Endothelial cell of umbilical vein (primary cell): ENCODE measurements at regions of chr12 and their contacts with region 1.

Region 1: DNA sequence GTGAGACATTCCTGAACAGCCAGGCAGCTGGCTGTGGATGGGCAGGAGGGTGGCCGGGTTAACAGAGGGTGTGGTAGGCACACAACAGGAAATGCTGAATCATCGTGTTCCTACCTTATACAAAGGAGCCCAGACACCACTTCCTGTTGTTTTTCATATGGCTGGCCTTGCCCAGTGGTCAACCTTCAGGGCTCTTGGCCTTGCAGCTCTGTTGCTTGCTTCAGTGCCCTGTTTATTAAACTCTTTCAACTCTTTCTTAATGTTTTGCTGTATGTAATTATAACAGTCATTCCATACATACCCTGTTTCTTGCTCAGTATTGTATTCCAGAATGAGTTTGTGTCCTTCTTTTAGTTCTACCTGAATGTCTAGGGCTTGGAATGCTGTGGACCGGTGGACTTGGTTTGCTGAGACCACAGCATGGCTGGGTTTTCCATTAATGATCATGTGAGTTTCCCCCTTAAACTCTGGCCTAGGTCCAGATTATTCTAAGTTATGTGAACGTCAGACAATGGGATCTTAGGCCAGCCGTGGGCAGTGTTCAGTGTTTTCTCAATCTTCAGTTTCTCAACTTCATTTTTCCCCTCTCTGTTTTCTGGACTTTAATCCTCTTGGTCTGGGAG is 11.9 kb downstream of the CFAP54 start:
- DNase-seq: peak; percentile 94
- H3K4me3 ChIP-seq: peak overlapping the region in 1 of 3 experiments; percentile 9
- H3K27ac ChIP-seq: peak overlapping the region; percentile 99
- H3K4me1 ChIP-seq: peaks cover 46% of the 10 kb centered on the region
- H3K27me3 ChIP-seq: no peaks in the 10 kb centered on the region
- CTCF ChIP-seq: no peak
- POLR2A ChIP-seq: peak; percentile 91

Region 2: GRCh38 chr12:95608252-95609033 is 892.8 kb before region 1 on chr12:
- CTCF ChIA-PET with region 1: no interaction called
- POLR2A ChIA-PET with region 1: no interaction called
- dilution Hi-C with region 1: no loop called
- intact Hi-C with region 1: loop called (anchors 5 kb)
- DNase-seq: peak; percentile 91
- H3K4me3 ChIP-seq: no peak overlapping the region
- H3K27ac ChIP-seq: peak overlapping the region; percentile 91
- H3K4me1 ChIP-seq: peaks cover 74% of the 10 kb centered on the region
- H3K27me3 ChIP-seq: no peaks in the 10 kb centered on the region
- CTCF ChIP-seq: no peak
- POLR2A ChIP-seq: no peak

Region 3: DNA sequence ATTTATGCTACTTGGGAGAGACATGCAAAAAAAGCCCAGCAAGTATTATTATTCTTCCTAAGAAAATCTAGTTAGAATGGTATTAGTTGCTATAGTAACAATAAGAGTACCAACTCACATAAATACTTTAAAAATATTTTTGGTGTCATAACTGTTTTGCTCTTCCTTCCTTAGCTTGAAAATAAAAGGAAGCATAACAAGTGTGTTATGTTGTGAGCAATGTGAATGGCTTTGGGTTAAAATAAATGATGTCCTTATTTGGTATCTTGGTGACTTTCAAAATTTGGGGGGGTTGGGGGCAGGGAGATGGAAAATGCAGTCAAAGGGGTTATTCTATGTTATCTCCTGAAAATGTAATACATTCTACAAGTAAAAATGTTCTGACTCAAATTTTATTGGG is 216.1 kb before region 1 on chr12:
- CTCF ChIA-PET with region 1: no interaction called
- POLR2A ChIA-PET with region 1: no interaction called
- dilution Hi-C with region 1: no loop called
- intact Hi-C with region 1: no loop called
- DNase-seq: no peak
- H3K4me3 ChIP-seq: no peak overlapping the region
- H3K27ac ChIP-seq: no peak overlapping the region
- H3K4me1 ChIP-seq: no peaks in the 10 kb centered on the region
- H3K27me3 ChIP-seq: no peaks in the 10 kb centered on the region
- CTCF ChIP-seq: no peak
- POLR2A ChIP-seq: no peak

Region 4: GRCh38 chr12:96335270-96335669 is 166.0 kb before region 1 on chr12:
- CTCF ChIA-PET with region 1: no interaction called
- POLR2A ChIA-PET with region 1: no interaction called
- dilution Hi-C with region 1: no loop called
- intact Hi-C with region 1: no loop called
- DNase-seq: peak; percentile 39
- H3K4me3 ChIP-seq: no peak overlapping the region
- H3K27ac ChIP-seq: no peak overlapping the region
- H3K4me1 ChIP-seq: peaks cover 30% of the 10 kb centered on the region
- H3K27me3 ChIP-seq: no peaks in the 10 kb centered on the region
- CTCF ChIP-seq: no peak
- POLR2A ChIP-seq: no peak

Region 5: DNA sequence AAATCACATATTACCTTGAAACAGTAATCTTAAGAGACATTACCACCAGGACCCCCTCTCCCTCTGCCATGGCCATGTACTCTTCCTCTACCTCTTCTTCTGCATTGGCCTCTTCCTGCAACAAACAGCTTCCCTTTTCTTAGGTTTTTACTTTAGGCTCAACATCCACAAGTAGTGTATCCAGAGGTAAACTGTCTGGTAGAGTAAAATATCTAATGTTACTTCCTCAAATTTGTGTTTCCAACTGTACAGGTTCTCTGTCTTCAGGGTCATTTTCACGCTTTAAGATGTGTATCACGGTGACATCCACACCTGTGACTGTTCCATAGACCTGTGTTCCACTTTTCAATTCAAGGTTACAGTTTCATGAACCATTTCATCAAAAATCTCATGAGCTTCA is 114.5 kb before region 1 on chr12:
- CTCF ChIA-PET with region 1: interaction called, 3 read pairs
- POLR2A ChIA-PET with region 1: no interaction called
- dilution Hi-C with region 1: loop called (anchors 5 kb)
- intact Hi-C with region 1: no loop called
- DNase-seq: no peak
- H3K4me3 ChIP-seq: no peak overlapping the region
- H3K27ac ChIP-seq: no peak overlapping the region
- H3K4me1 ChIP-seq: peaks cover 59% of the 10 kb centered on the region
- H3K27me3 ChIP-seq: no peaks in the 10 kb centered on the region
- CTCF ChIP-seq: no peak
- POLR2A ChIP-seq: no peak

Region 6: GRCh38 chr12:96416033-96416801 is 85.0 kb before region 1 on chr12:
- CTCF ChIA-PET with region 1: no interaction called
- POLR2A ChIA-PET with region 1: interaction called, 3 read pairs
- dilution Hi-C with region 1: no loop called
- intact Hi-C with region 1: loop called (anchors 1 kb)
- DNase-seq: peak; percentile 33
- H3K4me3 ChIP-seq: no peak overlapping the region
- H3K27ac ChIP-seq: no peak overlapping the region
- H3K4me1 ChIP-seq: peaks cover 43% of the 10 kb centered on the region
- H3K27me3 ChIP-seq: no peaks in the 10 kb centered on the region
- CTCF ChIP-seq: no peak
- POLR2A ChIP-seq: no peak

Region 7: GRCh38 chr12:96427269-96427729 is 74.0 kb before region 1 on chr12:
- CTCF ChIA-PET with region 1: interaction called, 5 read pairs
- POLR2A ChIA-PET with region 1: no interaction called
- dilution Hi-C with region 1: no loop called
- intact Hi-C with region 1: loop called (anchors 1 kb)
- DNase-seq: peak; percentile 99
- H3K4me3 ChIP-seq: peak overlapping the region in 2 of 3 experiments; percentile 3 to 47
- H3K27ac ChIP-seq: peak overlapping the region; percentile 99
- H3K4me1 ChIP-seq: peaks cover 56% of the 10 kb centered on the region
- H3K27me3 ChIP-seq: no peaks in the 10 kb centered on the region
- CTCF ChIP-seq: no peak
- POLR2A ChIP-seq: no peak

Region 8: DNA sequence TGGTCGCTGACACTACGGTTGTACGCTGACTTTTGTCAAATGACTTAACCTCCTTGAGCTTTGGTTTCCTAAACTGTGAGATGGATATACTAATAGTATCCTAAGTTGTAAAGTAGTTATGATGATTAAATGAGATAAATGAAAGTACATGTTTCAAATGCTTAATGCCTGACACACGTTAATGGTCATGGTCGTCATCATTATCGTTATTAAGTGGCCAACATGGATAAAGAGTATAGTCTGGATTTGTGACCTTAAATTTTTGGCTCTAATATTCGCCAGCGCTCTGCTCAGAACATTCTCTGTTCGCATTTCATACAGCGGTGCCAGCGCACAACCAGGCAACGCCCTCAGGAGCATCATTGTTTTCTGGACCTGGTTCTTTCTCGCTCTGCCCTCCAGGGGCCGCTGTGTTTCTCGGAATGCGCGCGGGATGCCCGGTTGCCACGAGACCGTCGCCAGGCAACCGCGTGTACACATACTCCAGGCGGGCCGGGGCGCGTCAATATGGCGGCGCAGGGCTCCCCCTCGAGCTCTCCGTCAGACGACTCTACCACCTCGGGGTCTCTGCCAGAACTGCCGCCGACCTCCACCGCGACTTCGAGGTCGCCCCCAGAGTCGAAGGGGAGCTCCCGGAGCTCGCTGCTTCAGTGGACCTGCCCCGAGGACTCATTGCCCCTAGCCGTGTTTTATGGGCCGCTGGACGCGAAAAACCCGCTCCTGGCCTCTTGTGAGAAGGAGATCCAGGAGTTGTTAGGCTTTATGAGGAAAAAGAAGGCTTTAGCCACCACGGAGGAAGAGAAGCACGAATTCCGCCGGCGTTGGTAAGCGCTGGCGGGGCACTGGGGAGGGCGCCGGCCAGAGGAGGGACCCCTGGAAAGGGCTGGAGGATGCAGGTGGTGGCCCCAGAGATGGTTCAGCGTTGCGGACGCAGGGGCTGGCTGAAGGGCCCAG is 11.9 kb before region 1 on chr12 and contains the start of gene CFAP54:
- CTCF ChIA-PET with region 1: interaction called, 9 read pairs
- POLR2A ChIA-PET with region 1: interaction called, 7 read pairs
- dilution Hi-C with region 1: no loop called
- intact Hi-C with region 1: loop called (anchors 1 kb)
- DNase-seq: peak; percentile 96
- H3K4me3 ChIP-seq: peak within 1 kb of the TSS; percentile 30 to 66 (median 53)
- H3K27ac ChIP-seq: peak within 1 kb of the TSS; percentile 88
- H3K4me1 ChIP-seq: peaks cover 57% of the 10 kb centered on the region
- H3K27me3 ChIP-seq: no peaks in the 10 kb centered on the region
- CTCF ChIP-seq: peak; percentile 92
- POLR2A ChIP-seq: no peak
- total RNA-seq, gene CFAP54: 21.5 and 26.9 TPM in 2 replicates